ENCODE measurements at regions of chr6 and their contacts with region 1.

Region 1: DNA sequence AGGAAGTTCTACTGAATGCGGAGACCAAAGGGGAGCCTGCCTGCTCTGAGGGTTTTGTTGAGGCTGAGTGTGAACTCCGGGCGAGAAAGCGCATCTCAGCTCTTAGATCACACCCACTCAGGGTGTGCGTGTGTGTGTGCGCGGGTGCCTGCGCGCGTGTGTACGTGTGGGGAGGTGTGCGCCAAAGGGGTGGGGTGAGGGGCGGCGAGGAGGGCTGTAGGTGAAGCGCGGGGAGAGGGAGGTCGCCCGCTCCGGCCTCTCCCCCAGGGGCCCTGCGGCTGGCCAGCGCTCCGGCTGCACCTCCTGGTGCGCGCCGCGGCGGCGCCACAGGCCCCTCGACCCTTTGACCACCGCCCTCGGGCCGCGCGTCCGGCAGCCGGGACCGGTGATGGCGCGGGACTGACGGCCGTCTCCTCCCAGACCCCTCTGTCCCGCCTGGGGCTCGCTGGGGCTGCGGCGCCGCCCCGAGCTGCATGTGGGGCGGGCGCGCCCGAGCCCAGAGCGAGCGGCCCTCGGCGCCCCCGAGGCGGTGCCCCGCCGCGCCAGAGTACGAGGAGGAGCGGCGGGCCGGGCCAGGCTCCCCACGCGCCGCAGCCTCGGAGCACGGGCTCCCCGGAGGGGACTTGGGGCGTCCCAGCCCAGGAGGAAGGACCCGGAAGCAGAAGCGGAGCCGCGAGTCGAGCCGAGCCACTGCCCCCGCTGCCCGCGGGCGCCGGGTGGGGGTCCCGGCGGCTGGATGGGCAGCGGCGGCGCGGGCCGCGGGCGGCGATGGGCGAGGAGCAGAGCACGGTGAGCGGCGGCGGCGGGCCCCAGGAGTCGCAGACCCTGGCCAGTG is at the start of gene RNF217:
- DNase-seq: peak; percentile 90
- H3K4me3 ChIP-seq: peak within 1 kb of the TSS; percentile 88 to 92 (median 89)
- H3K27ac ChIP-seq: peak within 1 kb of the TSS; percentile 95 to 99 (median 98)
- H3K4me1 ChIP-seq: peaks cover 0 to 42% (median 35%) of the 10 kb centered on the region in 4 donors
- H3K27me3 ChIP-seq: no peaks in the 10 kb centered on the region
- CTCF ChIP-seq: no peak
- EP300 ChIP-seq: peak in 1 of 4 donors; percentile 6
- POLR2A ChIP-seq: peak in 1 of 2 donors; percentile 40
- total RNA-seq, gene RNF217: 35.7 to 55.9 (median 49.2) TPM

Region 2: GRCh38 chr6:124870611-124871459 is 91.2 kb before region 1 on chr6:
- intact Hi-C with region 1: loop called (anchors 2 kb)
- DNase-seq: no peak
- H3K4me3 ChIP-seq: no peak overlapping the region
- H3K27ac ChIP-seq: no peak overlapping the region
- H3K4me1 ChIP-seq: peaks cover 0 to 12% (median 5%) of the 10 kb centered on the region in 4 donors
- H3K27me3 ChIP-seq: no peaks in the 10 kb centered on the region
- CTCF ChIP-seq: peak; percentile 25 to 72 (median 54)
- EP300 ChIP-seq: no peak
- POLR2A ChIP-seq: no peak

Region 3: DNA sequence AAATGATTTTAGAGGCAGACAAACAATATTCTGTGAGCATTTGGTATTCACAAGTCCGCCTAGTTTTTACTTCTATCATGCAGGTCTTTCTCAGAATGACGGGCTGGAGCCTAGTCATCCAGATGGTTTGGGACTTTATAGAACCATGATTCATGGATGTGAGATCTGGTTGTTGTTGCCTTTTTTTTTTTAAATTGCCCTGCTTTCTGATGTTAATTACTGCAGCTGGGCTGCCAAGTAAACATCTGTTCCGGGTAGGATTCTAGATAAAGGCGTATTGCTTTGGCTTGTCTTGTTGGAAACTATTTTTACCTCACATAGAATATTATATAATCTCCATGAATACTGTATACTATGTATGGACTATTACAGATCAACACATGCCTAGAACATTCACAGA is 58.4 kb after region 1 on chr6:
- intact Hi-C with region 1: no loop called
- DNase-seq: no peak
- H3K4me3 ChIP-seq: no peak overlapping the region
- H3K27ac ChIP-seq: no peak overlapping the region
- H3K4me1 ChIP-seq: peaks cover 0 to 31% (median 26%) of the 10 kb centered on the region in 4 donors
- H3K27me3 ChIP-seq: no peaks in the 10 kb centered on the region
- CTCF ChIP-seq: no peak
- EP300 ChIP-seq: no peak
- POLR2A ChIP-seq: no peak

Region 4: GRCh38 chr6:125041740-125042459 is 79.9 kb after region 1 on chr6:
- intact Hi-C with region 1: loop called (anchors 5 kb)
- DNase-seq: no peak
- H3K4me3 ChIP-seq: no peak overlapping the region
- H3K27ac ChIP-seq: peak overlapping the region in 3 of 4 donors; percentile 6 to 54 (median 11)
- H3K4me1 ChIP-seq: peaks cover 0 to 67% (median 31%) of the 10 kb centered on the region in 4 donors
- H3K27me3 ChIP-seq: no peaks in the 10 kb centered on the region
- CTCF ChIP-seq: no peak
- EP300 ChIP-seq: no peak
- POLR2A ChIP-seq: no peak

Region 5: DNA sequence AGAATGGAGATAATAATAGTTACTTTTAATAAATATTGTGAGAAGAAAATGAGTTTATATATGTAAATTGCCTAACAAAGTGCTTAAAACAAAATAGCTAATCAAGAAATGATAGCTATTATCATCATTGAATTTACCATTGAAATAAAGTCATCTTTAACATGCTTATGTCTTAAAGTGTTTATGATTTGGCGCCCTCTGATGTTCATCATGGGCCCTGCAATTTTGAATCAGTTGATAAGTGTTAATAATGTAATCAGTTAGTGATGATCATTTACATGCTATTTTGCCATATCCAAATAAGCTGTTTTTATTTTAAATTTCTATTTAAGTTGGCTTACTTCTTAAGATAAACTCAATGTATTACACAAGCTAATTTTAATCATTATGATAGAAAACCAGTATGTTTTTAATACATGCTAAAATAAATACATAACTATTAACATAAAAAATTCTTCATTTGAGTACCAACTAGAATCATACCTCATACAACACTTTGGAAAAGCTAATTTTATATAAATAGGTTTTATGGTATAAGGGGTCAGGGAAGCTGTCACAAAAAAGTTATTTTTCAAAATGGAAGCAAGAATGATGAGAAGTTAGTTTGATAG is 152.4 kb after region 1 on chr6:
- intact Hi-C with region 1: loop called (anchors 2 kb)
- DNase-seq: peak; percentile 72
- H3K4me3 ChIP-seq: no peak overlapping the region
- H3K27ac ChIP-seq: no peak overlapping the region
- H3K4me1 ChIP-seq: peaks cover 0 to 4% (median 0%) of the 10 kb centered on the region in 4 donors
- H3K27me3 ChIP-seq: no peaks in the 10 kb centered on the region
- CTCF ChIP-seq: peak; percentile 26 to 82 (median 69)
- EP300 ChIP-seq: no peak
- POLR2A ChIP-seq: no peak

Region 6: DNA sequence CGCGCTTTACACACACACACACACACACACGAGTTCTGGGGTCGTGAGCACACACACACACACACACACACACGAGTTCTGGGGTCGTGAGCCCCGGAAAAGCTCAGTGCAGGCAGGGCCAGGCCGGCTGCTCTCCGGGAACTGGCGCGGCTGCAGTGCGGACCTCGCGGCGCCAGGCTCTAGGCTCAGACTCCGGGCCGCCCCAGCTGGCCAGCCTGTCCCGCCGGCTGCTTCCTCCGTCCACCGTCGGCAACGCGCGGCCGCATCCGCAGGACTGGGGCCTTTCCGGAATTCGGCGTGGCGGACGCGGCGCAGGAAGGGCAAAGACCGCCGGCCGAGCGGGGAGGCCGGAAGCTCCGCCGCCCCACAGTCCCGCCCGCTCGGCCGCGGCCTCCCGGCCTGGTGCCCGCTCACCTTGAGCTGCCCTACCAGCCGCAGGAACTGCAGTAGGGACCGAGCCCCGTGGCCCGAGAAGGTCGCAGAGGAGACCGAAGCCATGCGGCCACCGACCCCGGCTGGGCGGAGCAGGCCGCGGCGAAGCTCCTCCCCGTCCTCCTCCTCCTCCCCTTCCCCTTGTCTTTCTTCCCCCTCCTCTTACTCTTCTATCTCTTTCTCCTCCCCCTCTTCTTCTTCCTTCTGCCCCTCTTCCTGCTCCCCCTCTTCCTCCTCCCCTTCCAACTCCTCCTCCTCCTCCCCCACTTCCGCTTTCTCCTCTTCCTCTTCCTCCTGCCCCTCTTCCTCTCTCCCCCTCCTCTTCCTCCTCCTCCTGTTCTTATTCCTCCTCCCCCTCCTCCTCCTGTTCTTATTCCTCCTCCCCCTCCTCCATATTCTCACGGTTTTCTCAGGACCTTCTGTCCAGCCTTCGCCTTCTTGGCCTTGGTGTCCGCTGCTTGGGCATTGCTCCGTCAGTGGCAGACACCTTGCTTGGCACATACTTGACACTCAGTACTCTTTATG is 339.7 kb after region 1 on chr6 and contains the start of gene HDDC2:
- intact Hi-C with region 1: loop called (anchors 10 kb)
- DNase-seq: peak; percentile 84
- H3K4me3 ChIP-seq: peak within 1 kb of the TSS; percentile 44 to 87 (median 70)
- H3K27ac ChIP-seq: peak within 1 kb of the TSS; percentile 91 to 94 (median 93)
- H3K4me1 ChIP-seq: peaks cover 0 to 17% (median 16%) of the 10 kb centered on the region in 4 donors
- H3K27me3 ChIP-seq: no peaks in the 10 kb centered on the region
- CTCF ChIP-seq: no peak
- EP300 ChIP-seq: no peak
- POLR2A ChIP-seq: no peak
- total RNA-seq, gene HDDC2: 39.9 to 61.7 (median 55.8) TPM

Measured in sigmoid colon (tissue), 7 donors.